Naive thymus-derived CD4-positive, alpha-beta T cell (primary cell): ENCODE measurements at regions of chr7 and their contacts with region 1.

Region 1: GRCh38 chr7:27196287-27196767 is 3.6 kb downstream of the HOXA13 start:
- DNase-seq: peak; percentile 62 to 82 (median 72)
- ATAC-seq: peak; percentile 55
- H3K4me3 ChIP-seq: no peak overlapping the region
- H3K4me3 Mint-ChIP-seq: no peak overlapping the region
- H3K27ac ChIP-seq: no peak overlapping the region
- H3K27ac Mint-ChIP-seq: peak overlapping the region in 2 of 9 donors; percentile 69
- H3K4me1 ChIP-seq: peaks cover 19 to 34% of the 10 kb centered on the region in 2 donors
- H3K4me1 Mint-ChIP-seq: peaks cover 9 to 47% (median 36%) of the 10 kb centered on the region in 7 donors
- H3K27me3 ChIP-seq: peaks cover 37 to 69% of the 10 kb centered on the region in 2 donors
- H3K27me3 Mint-ChIP-seq: peaks cover 78 to 85% (median 80%) of the 10 kb centered on the region in 5 donors

Region 2: GRCh38 chr7:26760501-26760900 is 435.8 kb before region 1 on chr7:
- CTCF ChIA-PET with region 1: no interaction called
- POLR2A ChIA-PET with region 1: no interaction called
- intact Hi-C with region 1: no loop called
- DNase-seq: no peak
- ATAC-seq: no peak
- H3K4me3 ChIP-seq: no peak overlapping the region
- H3K4me3 Mint-ChIP-seq: no peak overlapping the region
- H3K27ac ChIP-seq: no peak overlapping the region
- H3K27ac Mint-ChIP-seq: no peak overlapping the region
- H3K4me1 ChIP-seq: no peaks in the 10 kb centered on the region
- H3K4me1 Mint-ChIP-seq: no peaks in the 10 kb centered on the region
- H3K27me3 ChIP-seq: no peaks in the 10 kb centered on the region
- H3K27me3 Mint-ChIP-seq: no peaks in the 10 kb centered on the region

Region 3: DNA sequence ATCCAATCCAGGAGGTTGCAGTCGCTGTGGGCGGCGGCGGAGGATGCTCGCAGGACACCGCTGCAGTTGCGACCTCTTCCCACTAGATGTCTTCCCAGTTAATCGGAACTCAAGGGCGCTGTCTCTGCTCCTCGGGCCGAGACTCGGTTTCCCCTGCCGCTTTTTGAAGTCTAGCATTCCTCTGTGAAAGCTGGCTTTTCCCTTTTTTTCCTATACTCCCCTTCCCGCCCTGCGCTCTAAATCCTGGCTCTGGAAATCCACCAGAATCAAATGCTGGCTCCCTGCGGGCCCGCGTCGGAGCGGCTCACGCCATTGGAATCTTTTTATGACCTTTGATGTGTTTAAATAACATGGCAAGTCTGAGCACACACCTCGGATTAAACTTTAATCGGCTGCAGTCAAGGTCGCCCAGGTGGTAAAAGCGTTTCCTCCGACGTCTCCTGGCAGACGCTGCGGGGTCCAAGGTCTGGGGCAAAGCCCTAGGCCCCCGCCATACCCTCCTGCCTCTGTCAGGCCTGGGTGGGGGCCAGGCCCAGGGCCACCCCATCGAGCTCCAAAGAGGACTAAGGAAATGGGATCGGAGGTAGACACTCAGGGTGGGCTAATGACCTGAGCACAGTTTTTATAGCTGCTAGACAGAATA is 14.2 kb after region 1 on chr7:
- CTCF ChIA-PET with region 1: interaction called, 13 read pairs
- POLR2A ChIA-PET with region 1: no interaction called
- intact Hi-C with region 1: no loop called
- DNase-seq: peak in 2 of 9 donors; percentile 28 to 47
- ATAC-seq: peak; percentile 74
- H3K4me3 ChIP-seq: no peak overlapping the region
- H3K4me3 Mint-ChIP-seq: peak overlapping the region; percentile 35 to 79 (median 66)
- H3K27ac ChIP-seq: no peak overlapping the region
- H3K27ac Mint-ChIP-seq: no peak overlapping the region
- H3K4me1 ChIP-seq: peaks cover 4 to 7% of the 10 kb centered on the region in 2 donors
- H3K4me1 Mint-ChIP-seq: peaks cover 0 to 29% (median 18%) of the 10 kb centered on the region in 7 donors
- H3K27me3 ChIP-seq: peaks cover 21 to 64% of the 10 kb centered on the region in 2 donors
- H3K27me3 Mint-ChIP-seq: peaks cover 80 to 97% (median 93%) of the 10 kb centered on the region in 5 donors

Region 4: GRCh38 chr7:27605689-27606269 is 409.5 kb after region 1 on chr7:
- CTCF ChIA-PET with region 1: interaction called, 4 read pairs
- POLR2A ChIA-PET with region 1: no interaction called
- intact Hi-C with region 1: loop called in 1 of 2 experiments (anchors 1 kb)
- DNase-seq: no peak
- ATAC-seq: no peak
- H3K4me3 ChIP-seq: no peak overlapping the region
- H3K4me3 Mint-ChIP-seq: no peak overlapping the region
- H3K27ac ChIP-seq: no peak overlapping the region
- H3K27ac Mint-ChIP-seq: no peak overlapping the region
- H3K4me1 ChIP-seq: no peaks in the 10 kb centered on the region
- H3K4me1 Mint-ChIP-seq: peaks cover 0 to 6% (median 0%) of the 10 kb centered on the region in 7 donors
- H3K27me3 ChIP-seq: no peaks in the 10 kb centered on the region
- H3K27me3 Mint-ChIP-seq: no peaks in the 10 kb centered on the region

Region 5: DNA sequence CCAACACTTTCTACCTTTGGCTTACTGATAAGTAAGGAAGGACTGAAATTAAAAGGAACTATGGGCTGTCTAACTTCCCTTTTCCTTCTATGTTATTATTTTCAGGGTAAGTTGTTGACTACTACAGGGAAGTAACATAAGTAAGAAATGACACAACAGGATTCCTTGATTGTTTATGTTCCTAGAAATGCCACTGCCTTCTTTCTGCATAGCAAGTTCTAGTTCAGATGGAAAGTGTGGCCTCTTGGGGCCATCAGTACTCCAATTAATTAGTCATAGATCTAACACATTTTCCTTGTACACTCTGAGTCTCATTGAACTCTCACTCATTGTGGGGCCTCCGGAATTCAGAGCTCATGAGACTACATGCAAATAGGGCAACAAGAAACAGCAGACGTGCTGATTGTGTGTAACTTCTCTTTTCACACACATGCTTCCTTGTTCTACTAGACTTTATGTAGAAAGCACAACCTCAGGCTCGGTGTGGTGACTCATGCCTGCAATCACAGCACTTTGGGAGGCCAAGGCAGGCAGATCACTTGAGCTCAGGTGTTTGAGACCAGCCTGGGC is 501.6 kb after region 1 on chr7:
- CTCF ChIA-PET with region 1: no interaction called
- POLR2A ChIA-PET with region 1: no interaction called
- intact Hi-C with region 1: no loop called
- DNase-seq: no peak
- ATAC-seq: peak; percentile 83
- H3K4me3 ChIP-seq: no peak overlapping the region
- H3K4me3 Mint-ChIP-seq: no peak overlapping the region
- H3K27ac ChIP-seq: no peak overlapping the region
- H3K27ac Mint-ChIP-seq: no peak overlapping the region
- H3K4me1 ChIP-seq: no peaks in the 10 kb centered on the region
- H3K4me1 Mint-ChIP-seq: peaks cover 0 to 2% (median 0%) of the 10 kb centered on the region in 7 donors
- H3K27me3 ChIP-seq: peaks cover 0 to 5% of the 10 kb centered on the region in 2 donors
- H3K27me3 Mint-ChIP-seq: peaks cover 7 to 10% (median 7%) of the 10 kb centered on the region in 5 donors

Region 6: GRCh38 chr7:27921081-27921836 is 724.9 kb after region 1 on chr7:
- CTCF ChIA-PET with region 1: interaction called, 16 read pairs
- POLR2A ChIA-PET with region 1: interaction called, 3 read pairs
- intact Hi-C with region 1: loop called (anchors 1 kb)
- DNase-seq: peak in 6 of 9 donors; percentile 17 to 59 (median 44)
- ATAC-seq: peak; percentile 67
- H3K4me3 ChIP-seq: no peak overlapping the region
- H3K4me3 Mint-ChIP-seq: no peak overlapping the region
- H3K27ac ChIP-seq: no peak overlapping the region
- H3K27ac Mint-ChIP-seq: peak overlapping the region in 1 of 9 donors; percentile 11
- H3K4me1 ChIP-seq: no peaks in the 10 kb centered on the region
- H3K4me1 Mint-ChIP-seq: peaks cover 0 to 11% (median 1%) of the 10 kb centered on the region in 7 donors
- H3K27me3 ChIP-seq: no peaks in the 10 kb centered on the region
- H3K27me3 Mint-ChIP-seq: no peaks in the 10 kb centered on the region

Region 7: DNA sequence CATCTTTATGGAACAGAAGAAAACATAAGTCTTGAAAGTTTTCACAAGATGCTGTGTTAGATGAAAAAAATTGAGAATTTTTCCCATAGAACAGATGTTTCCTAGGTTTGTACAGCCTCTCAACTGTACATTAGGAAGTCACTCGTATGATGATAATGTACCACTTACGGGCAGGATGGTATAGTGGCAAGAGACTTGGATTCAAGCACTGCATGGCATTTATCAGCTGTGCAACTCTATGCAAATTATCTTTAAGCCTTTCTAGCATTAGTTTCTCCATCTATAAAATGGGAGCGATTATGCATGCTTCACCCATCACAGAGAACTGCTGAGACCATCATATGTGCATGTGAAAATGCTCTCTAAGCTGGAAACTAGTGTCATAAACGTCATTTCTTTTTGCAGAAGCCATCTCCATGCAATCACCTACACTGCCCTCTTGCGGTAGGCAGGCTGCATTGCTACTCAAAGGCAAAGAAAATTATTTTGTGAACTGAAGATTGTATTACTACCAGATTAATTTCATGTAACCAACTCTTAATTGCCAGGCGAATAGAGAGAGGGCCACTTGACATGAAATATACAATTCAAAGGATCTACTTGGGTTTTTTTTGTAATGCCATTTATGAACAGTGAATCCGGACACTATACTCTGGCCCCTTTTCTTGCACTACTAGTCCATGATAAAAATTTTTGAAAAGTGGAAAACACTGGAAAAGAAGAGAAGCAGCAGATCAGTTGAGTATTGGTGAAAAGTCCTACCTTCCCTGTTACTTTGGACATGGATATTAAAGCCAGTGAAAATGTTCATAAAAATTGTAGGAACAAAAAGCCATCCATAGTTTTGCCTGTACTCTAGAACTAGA is 881.9 kb after region 1 on chr7:
- CTCF ChIA-PET with region 1: interaction called, 15 read pairs
- POLR2A ChIA-PET with region 1: no interaction called
- intact Hi-C with region 1: loop called in 1 of 2 experiments (anchors 1 kb)
- DNase-seq: peak in 7 of 9 donors; percentile 8 to 57 (median 44)
- ATAC-seq: peak; percentile 88
- H3K4me3 ChIP-seq: no peak overlapping the region
- H3K4me3 Mint-ChIP-seq: no peak overlapping the region
- H3K27ac ChIP-seq: no peak overlapping the region
- H3K27ac Mint-ChIP-seq: no peak overlapping the region
- H3K4me1 ChIP-seq: no peaks in the 10 kb centered on the region
- H3K4me1 Mint-ChIP-seq: peaks cover 0 to 35% (median 12%) of the 10 kb centered on the region in 7 donors
- H3K27me3 ChIP-seq: no peaks in the 10 kb centered on the region
- H3K27me3 Mint-ChIP-seq: peaks cover 0 to 8% (median 0%) of the 10 kb centered on the region in 5 donors

Region 8: DNA sequence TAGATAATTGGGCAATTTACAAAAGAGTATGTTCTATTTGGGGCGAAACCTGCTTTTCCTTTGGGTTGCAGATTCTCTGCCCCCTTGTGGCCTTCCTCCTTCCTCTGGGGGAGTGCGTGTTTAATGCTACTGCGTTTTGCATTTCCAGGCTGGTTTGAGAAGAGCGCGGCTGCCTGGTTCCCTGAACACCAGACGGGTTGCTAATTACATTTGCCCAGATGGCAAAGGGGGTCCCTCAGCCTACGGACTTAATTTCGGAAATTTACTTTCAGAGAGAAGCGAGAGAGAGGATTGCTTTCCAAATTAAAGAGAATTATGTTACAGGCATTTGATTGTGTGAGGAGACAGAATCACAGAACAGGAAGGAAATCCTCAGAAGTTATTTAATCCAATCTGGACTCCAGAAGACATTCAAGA is 1076.1 kb after region 1 on chr7:
- CTCF ChIA-PET with region 1: no interaction called
- POLR2A ChIA-PET with region 1: no interaction called
- intact Hi-C with region 1: loop called in 1 of 2 experiments (anchors 10 kb)
- DNase-seq: peak in 6 of 9 donors; percentile 7 to 20 (median 15)
- ATAC-seq: peak; percentile 73
- H3K4me3 ChIP-seq: no peak overlapping the region
- H3K4me3 Mint-ChIP-seq: peak overlapping the region in 8 of 10 donors; percentile 3 to 78 (median 62)
- H3K27ac ChIP-seq: no peak overlapping the region
- H3K27ac Mint-ChIP-seq: peak overlapping the region in 1 of 9 donors; percentile 31
- H3K4me1 ChIP-seq: no peaks in the 10 kb centered on the region
- H3K4me1 Mint-ChIP-seq: peaks cover 0 to 7% (median 5%) of the 10 kb centered on the region in 7 donors
- H3K27me3 ChIP-seq: no peaks in the 10 kb centered on the region
- H3K27me3 Mint-ChIP-seq: peaks cover 5 to 40% (median 24%) of the 10 kb centered on the region in 5 donors